PC-9 (cell line): ENCODE measurements at regions of chrX and their contacts with region 1.

Region 1: GRCh38 chrX:119482481-119483480 is 14.5 kb downstream of the SLC25A5 start:
- DNase-seq: peak; percentile 70 to 78
- H3K4me3 ChIP-seq: peak overlapping the region; percentile 57; the same call in 1 of the 2 replicates
- H3K27ac ChIP-seq: 0 out of 2 replicates have a peak overlapping the region, but pooled peaks have one; percentile 37
- H3K4me1 ChIP-seq: peaks cover 16% of the 10 kb centered on the region
- H3K27me3 ChIP-seq: no peaks in the 10 kb centered on the region
- CTCF ChIP-seq: peak; percentile 81

Region 2: GRCh38 chrX:119145241-119145653 is 337.5 kb before region 1 on chrX:
- CTCF ChIA-PET with region 1: no interaction called
- POLR2A ChIA-PET with region 1: interaction called, 20 read pairs
- intact Hi-C with region 1: loop called (anchors 10 kb)
- DNase-seq: peak in 1 of 2 experiments; percentile 23
- H3K4me3 ChIP-seq: no peak overlapping the region
- H3K27ac ChIP-seq: no peak overlapping the region
- H3K4me1 ChIP-seq: no peaks in the 10 kb centered on the region
- H3K27me3 ChIP-seq: no peaks in the 10 kb centered on the region
- CTCF ChIP-seq: peak; percentile 57

Region 3: GRCh38 chrX:119442286-119442685 is 40.5 kb before region 1 on chrX:
- CTCF ChIA-PET with region 1: no interaction called
- POLR2A ChIA-PET with region 1: no interaction called
- intact Hi-C with region 1: no loop called
- DNase-seq: no peak
- H3K4me3 ChIP-seq: no peak overlapping the region
- H3K27ac ChIP-seq: no peak overlapping the region
- H3K4me1 ChIP-seq: no peaks in the 10 kb centered on the region
- H3K27me3 ChIP-seq: no peaks in the 10 kb centered on the region
- CTCF ChIP-seq: no peak

Region 4: DNA sequence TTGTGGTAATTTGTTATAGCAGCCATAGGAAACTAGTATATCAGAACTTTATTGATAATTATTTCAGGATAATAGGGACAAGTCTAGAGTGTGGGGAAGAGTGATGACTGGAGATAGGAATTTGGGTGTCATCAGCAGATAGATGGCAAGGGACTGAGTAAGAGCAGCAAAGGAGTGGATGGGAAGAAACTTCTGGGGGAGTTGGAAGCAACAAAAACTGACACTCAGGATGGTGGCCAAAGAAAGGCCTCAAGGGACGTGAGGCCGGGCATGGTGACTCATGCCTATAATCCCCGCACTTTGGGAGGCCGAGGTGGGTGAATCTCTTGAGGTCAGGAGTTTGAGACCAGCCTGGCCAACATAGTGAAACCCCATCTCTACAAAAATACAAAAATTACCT is 23.6 kb before region 1 on chrX:
- CTCF ChIA-PET with region 1: interaction called, 7 read pairs
- POLR2A ChIA-PET with region 1: interaction called, 31 read pairs
- intact Hi-C with region 1: no loop called
- DNase-seq: no peak
- H3K4me3 ChIP-seq: no peak overlapping the region
- H3K27ac ChIP-seq: no peak overlapping the region
- H3K4me1 ChIP-seq: no peaks in the 10 kb centered on the region
- H3K27me3 ChIP-seq: no peaks in the 10 kb centered on the region
- CTCF ChIP-seq: no peak

Region 5: DNA sequence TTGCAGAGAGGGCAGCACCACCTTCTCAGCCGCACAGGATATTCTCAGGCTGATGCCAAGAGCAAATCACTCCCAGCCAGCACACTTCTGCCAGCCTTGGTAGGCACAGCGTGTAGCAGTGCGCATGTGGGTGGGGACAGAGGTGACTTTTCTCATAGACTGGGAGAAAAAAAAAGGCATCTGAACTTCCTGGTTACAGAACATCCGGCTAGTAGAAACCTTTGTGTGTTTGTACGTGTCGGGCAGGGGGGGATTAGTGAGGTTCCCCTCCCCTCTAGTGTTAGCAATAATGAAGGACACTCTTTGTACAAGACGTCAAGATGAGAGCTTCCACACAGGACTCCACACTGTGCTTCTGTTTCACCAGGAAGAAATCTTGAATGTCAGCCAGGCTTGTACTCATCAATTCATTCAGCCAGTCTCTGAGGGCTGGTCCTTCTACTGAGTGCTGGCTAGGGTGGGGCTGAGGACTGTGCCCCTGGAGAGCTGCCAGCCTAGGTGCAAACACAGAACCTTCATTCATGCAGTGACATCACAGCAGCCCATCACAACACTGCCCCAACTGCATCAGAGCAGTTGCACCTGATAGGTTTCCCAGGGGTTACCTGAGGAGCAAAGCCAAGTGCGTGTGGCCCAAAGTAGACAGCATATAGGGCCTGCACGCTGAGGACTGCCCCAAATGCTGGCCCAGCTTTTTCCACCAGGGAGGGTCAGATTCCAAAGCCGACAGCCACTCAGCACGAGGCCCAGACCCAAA is 20.1 kb after region 1 on chrX:
- CTCF ChIA-PET with region 1: interaction called, 7 read pairs
- POLR2A ChIA-PET with region 1: interaction called, 16 read pairs
- intact Hi-C with region 1: no loop called
- DNase-seq: peak; percentile 78 to 86
- H3K4me3 ChIP-seq: peak overlapping the region; percentile 43; the same call in 1 of the 2 replicates
- H3K27ac ChIP-seq: peak overlapping the region; percentile 95
- H3K4me1 ChIP-seq: peaks cover 49% of the 10 kb centered on the region
- H3K27me3 ChIP-seq: no peaks in the 10 kb centered on the region
- CTCF ChIP-seq: no peak; the same call in 1 of the 2 replicates